ENCODE measurements at regions of chr17 and their contacts with region 1.

Region 1: GRCh38 chr17:63842540-63843386 is at the start of gene SMARCD2:
- DNase-seq: peak; percentile 98
- H3K4me3 Mint-ChIP-seq: peak within 1 kb of the TSS; percentile 96
- H3K27ac Mint-ChIP-seq: peak within 1 kb of the TSS; percentile 91
- H3K4me1 Mint-ChIP-seq: peaks cover 39% of the 10 kb centered on the region
- H3K27me3 Mint-ChIP-seq: no peaks in the 10 kb centered on the region
- total RNA-seq, gene SMARCD2: 116 TPM in 2 replicates

Region 2: GRCh38 chr17:63697341-63698286 is 145.1 kb before region 1 on chr17:
- intact Hi-C with region 1: loop called (anchors 1 kb)
- DNase-seq: peak; percentile 76
- H3K4me3 Mint-ChIP-seq: peak overlapping the region; percentile 96
- H3K27ac Mint-ChIP-seq: peak overlapping the region; percentile 96
- H3K4me1 Mint-ChIP-seq: peaks cover 53% of the 10 kb centered on the region
- H3K27me3 Mint-ChIP-seq: no peaks in the 10 kb centered on the region

Region 3: DNA sequence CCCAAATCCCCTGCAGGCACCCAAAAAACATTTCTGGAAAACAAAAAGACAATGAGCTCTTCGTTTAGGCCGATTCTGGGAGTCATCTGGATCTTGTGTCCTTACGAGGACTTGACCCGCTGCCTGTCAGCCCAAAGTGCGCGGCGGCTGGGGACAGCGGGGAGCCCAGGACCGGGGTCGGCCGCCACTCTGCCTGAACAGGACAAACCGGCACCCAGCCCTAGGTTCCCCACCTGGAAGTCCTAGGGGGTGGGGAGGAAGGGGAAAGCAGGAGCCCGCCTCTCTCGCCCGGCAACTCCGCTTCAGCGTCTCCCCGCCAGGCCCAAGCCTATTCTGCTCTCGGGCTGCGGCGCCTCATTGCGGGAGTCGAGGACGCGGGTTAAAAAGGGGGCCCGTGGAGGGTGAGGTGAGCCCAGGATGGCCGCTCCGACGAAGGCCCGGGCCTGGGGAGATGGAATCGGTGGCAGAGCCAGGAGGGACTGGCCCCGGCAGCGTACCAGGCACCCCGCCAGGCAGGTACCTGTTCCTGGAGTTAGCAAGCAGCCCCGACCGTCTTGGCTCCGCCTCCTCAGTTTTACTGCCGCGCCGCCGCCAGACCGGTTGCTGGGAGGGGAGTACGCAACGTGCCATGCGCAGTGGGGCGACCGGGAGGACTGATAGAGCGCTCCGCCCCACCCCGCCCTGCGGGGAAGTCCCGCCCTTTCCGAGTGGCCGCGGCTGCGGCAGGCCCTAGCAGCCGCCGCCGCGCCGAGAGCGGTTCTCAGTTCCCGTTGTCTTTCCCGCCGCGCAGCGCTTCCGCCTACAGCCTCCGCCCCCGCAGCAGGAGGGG is 101.3 kb before region 1 on chr17 and contains the start of gene STRADA:
- intact Hi-C with region 1: loop called (anchors 5 kb)
- DNase-seq: peak; percentile 99
- H3K4me3 Mint-ChIP-seq: peak within 1 kb of the TSS; percentile 98
- H3K27ac Mint-ChIP-seq: peak within 1 kb of the TSS; percentile 97
- H3K4me1 Mint-ChIP-seq: peaks cover 25% of the 10 kb centered on the region
- H3K27me3 Mint-ChIP-seq: no peaks in the 10 kb centered on the region
- total RNA-seq, gene STRADA: 59.1 and 59.4 TPM in 2 replicates

Region 4: DNA sequence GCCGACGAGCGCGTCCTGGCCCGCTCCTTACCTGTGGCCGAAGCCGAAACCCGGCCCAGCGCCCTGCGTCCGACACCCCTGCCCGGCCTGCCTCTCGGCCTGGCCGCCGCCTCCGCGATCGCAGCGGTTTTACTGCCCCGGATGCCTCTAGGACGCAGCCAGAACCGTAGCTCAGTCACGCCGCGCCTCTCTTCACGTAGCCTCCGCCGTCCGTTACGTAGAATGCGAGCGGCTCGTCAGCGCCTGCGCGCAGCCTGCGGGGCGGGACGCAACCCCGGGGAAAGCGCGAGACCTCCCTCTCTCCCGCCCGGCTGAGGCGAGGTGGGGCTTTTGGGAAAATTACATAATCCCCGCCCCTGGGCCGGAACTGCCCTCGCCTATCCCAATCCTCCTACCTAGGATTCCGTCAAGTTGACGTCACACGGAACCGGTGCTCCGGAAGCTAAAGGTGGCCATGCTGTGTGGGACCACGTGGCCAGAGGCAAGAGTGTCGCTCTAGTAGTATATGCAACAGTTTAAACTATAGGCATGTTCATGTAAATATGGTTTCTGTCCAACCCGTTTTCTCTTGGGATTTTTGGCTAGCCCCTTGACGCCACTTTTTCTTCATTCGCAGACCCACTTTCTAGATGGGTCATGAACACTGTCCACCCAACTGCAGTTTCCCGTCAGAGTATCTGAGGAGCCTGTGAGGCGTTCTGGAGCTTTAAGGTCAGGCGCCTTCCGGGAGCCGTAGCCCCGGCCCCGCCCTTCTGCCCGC is 69.2 kb before region 1 on chr17 and contains the start of gene CCDC47:
- intact Hi-C with region 1: loop called (anchors 1 kb)
- DNase-seq: peak; percentile 99
- H3K4me3 Mint-ChIP-seq: peak within 1 kb of the TSS; percentile 96
- H3K27ac Mint-ChIP-seq: peak within 1 kb of the TSS; percentile 100
- H3K4me1 Mint-ChIP-seq: peaks cover 63% of the 10 kb centered on the region
- H3K27me3 Mint-ChIP-seq: no peaks in the 10 kb centered on the region
- total RNA-seq, gene CCDC47: 74.8 and 79.2 TPM in 2 replicates

Region 5: DNA sequence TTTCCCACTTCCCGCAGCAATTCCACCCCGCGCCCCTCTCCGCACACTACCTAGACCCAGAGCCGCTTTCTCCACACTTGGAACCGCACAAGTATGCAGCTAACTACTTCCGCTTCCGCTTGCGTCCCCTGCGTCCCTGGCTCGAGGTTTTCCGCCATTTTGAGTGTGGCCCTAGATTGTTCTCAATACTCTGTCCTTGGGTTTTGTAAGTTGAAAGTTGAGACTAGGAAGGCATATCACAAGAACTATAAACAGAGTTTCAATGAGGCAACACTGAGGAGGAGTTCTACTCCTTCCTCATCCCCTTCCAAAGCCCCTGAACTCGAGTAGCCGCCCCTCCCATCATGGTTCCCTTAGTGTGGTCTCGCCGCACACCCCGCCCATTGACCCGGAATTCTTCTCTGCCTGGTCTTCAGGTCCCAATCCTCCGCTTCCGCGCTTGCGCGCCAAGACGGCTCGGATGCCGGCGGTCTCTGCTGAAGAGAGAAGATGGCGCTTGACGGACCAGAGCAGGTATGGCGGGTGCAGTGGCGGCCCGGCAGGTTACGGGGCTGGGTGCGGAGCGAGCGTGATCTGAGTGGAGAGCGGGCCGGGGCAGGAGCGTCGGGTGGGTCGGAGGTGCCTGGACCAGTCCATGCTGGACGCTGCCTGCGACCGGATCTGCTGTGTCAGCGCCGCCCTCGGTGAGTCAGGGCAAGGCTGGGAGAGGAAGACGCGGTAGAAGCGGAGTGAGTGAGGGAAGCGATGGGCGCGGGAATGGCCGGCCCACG is 15.6 kb before region 1 on chr17 and contains the starts of genes FTSJ3 and PSMC5:
- intact Hi-C with region 1: loop called (anchors 1 kb)
- DNase-seq: peak; percentile 94
- H3K4me3 Mint-ChIP-seq: peak within 1 kb of the TSS; percentile 96
- H3K27ac Mint-ChIP-seq: peak within 1 kb of the TSS; percentile 98
- H3K4me1 Mint-ChIP-seq: peaks cover 71% of the 10 kb centered on the region
- H3K27me3 Mint-ChIP-seq: no peaks in the 10 kb centered on the region
- total RNA-seq, gene FTSJ3: 95.6 and 100 TPM in 2 replicates
- total RNA-seq, gene PSMC5: 185 and 195 TPM in 2 replicates

Region 6: DNA sequence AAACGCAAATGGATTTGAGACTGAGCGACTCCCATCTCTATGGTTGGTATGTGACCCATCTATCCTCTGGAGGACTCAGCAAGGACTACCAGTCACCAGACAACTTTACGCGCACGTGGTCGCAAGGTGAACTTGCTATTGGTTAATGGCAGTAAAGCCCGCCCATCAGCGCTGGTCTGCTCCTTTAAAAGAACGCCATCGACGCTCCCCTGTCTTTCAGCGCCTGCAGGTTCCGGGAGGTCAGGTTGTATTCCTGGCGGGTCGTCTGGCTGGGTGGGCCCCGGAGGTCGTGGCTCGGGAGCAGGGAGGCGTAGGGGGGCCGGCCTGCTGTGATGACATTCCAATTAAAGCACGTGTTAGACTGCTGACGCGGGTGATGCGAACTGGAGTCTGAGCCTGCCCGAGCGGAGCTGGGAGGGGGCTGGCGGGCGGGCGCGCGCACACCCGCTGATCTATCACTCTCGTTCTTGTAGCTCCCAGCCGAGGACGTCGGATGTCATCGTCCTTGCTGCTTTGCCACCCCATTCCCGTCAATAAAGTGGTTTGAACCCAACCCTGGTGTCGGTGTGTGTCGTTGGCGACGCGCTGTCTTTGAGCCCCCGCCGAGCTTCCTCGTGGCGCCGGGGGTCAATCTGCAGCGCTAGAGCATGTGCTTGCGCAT is 303.1 kb after region 1 on chr17:
- intact Hi-C with region 1: loop called (anchors 5 kb)
- DNase-seq: peak; percentile 93
- H3K4me3 Mint-ChIP-seq: no peak overlapping the region
- H3K27ac Mint-ChIP-seq: no peak overlapping the region
- H3K4me1 Mint-ChIP-seq: peaks cover 19% of the 10 kb centered on the region
- H3K27me3 Mint-ChIP-seq: peaks cover 2% of the 10 kb centered on the region

Measured in activated T-helper 1 cell treated with anti-CD3 and anti-CD28 coated beads, Interleukin-12 subunit alpha, Interleukin-12 subunit beta, Interleukin-2, Interleukin-4 antibody, amounts not matched to agents 30 ng/mL and 10 ng/mL and 1 ng/mL, durations not matched to agents 14 hours and 24 hours and 36 hours (primary cell).